ENCODE measurements at regions of chr2 and their contacts with region 1.

Region 1: DNA sequence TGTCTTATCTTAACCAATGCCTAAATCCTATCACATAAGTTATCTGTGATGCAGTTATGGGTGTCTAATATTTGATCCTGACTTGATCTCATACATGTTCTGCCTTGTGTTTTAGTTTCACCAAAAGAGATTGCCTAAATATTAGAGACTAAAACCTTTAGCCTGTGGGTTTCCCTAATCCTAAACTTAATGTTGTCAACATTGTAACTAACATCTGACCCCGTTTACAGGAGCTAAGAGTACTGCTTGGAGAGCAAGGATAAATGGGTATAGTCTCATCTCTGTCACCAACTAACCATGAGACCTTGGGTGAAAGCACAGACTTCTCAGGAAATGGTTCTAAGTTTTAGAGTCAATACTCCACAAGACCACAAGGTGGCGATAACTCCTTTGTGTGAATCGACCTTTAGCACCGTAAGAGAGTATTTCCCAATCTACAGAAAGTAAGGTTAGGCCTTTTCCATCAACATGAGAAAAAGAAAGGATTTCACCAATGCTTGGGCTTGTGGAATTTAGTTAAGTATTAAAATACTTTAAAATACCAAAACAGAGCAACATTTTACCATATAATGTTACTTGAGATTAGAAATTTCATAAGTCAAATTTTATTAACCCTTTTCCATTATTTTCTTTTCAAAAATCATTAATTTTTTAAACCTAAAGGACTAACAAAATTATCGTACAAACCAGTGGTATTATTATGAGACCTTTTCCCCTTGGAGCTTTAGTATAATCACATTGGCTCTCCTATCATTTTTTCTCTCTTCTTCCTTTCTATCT is 60.5 kb downstream of the G6PC2 start:
- DNase-seq: peak in 1 of 10 donors; percentile 19

Region 2: GRCh38 chr2:168536925-168537466 is 424.6 kb before region 1 on chr2:
- intact Hi-C with region 1: no loop called
- DNase-seq: no peak

Region 3: DNA sequence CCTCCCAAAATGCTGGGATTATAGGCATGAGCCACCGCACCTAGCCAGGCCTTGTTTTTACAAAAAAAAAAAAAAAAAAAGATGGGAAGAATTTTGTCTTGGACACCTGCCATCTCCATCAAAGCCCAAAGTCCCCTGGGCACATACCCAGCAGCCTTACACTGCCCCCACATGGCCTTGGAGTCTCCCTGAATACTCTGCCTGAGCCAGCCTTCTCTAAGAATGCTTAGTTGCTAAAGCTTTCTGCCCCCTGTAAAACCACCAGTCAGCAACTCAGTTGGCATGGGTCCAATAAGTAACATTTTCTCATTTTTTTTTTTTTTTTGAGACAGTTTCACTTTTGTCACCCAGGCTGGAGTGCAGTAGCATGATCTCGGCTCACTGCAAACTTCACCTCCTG is 112.0 kb before region 1 on chr2:
- intact Hi-C with region 1: no loop called
- DNase-seq: no peak

Region 4: GRCh38 chr2:169131587-169132512 is 170.2 kb after region 1 on chr2:
- intact Hi-C with region 1: loop called (anchors 5 kb)
- DNase-seq: no peak